Calu3 (cell line): ENCODE measurements at regions of chr2 and their contacts with region 1.

Region 1: DNA sequence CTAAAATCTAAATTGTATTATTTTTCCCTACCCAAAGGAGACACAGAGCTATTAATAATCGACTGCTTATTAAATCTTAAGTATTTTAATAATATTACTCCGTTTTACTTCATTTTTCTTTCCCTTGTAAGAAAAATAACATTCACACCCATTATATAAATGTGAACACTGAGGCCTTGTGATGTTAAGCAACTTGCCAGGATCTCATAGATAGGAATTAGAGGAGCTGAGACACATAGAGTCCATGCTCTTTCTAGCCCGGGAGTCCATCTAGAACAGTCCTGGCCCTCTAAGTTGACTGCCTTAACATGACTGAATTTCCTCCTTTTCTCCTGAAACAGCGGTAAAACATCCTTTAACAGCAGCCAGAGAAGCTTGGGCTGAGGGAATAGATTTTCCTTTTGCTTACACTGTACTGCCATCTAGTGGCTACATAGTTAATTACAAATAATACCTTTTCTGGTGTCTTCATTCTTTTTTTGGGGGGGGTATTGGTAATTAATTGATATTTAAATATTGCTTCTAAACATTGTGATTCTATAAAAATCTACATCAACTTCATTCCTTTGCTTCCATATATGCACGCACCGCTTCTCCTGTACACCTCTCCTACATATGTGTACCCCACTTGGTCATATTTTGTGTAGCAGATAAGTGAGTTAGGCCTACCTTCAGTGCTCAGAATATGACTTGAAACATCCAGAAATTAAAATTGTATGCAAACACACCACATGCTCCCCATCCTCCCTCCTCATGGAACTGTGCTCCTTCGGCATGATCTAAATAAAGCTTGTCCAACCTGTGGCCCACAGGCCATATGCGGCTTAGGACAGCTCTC is 125.8 kb upstream of the HNMT start:
- DNase-seq: no peak
- H3K4me3 Mint-ChIP-seq: no peak overlapping the region
- H3K27ac Mint-ChIP-seq: no peak overlapping the region
- H3K4me1 Mint-ChIP-seq: peaks cover 8% of the 10 kb centered on the region
- H3K27me3 Mint-ChIP-seq: no peaks in the 10 kb centered on the region
- CTCF ChIP-seq: no peak

Region 2: DNA sequence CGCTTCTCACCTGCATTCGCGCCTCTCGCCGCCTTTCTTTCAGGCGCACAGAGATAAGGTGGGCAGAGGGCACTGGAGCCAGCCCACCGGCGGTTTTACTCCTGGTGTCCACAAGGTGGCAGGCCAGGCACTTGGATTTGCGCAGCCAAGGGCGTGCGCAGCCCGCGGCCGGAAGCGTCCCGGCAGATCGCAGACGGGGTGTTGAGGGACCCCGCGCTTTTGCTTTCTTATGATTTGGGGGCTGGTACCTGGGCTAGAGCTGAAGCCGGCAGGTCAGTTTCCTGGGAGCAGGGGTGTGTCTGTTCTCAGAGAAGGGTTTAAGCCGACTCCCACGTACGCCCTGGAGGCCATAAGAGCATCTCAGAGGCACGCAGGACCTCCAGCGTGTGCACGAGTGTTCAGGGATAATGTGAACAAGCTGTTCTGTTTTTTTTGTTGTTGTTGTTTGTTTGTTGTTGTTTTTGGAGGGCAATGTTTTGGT is 1414.9 kb before region 1 on chr2:
- CTCF ChIA-PET with region 1: no interaction called
- intact Hi-C with region 1: loop called (anchors 2 kb)
- DNase-seq: peak; percentile 82
- H3K4me3 Mint-ChIP-seq: peak overlapping the region; percentile 77
- H3K27ac Mint-ChIP-seq: no peak overlapping the region
- H3K4me1 Mint-ChIP-seq: peaks cover 9% of the 10 kb centered on the region
- H3K27me3 Mint-ChIP-seq: peaks cover 36% of the 10 kb centered on the region
- CTCF ChIP-seq: peak; percentile 91

Region 3: DNA sequence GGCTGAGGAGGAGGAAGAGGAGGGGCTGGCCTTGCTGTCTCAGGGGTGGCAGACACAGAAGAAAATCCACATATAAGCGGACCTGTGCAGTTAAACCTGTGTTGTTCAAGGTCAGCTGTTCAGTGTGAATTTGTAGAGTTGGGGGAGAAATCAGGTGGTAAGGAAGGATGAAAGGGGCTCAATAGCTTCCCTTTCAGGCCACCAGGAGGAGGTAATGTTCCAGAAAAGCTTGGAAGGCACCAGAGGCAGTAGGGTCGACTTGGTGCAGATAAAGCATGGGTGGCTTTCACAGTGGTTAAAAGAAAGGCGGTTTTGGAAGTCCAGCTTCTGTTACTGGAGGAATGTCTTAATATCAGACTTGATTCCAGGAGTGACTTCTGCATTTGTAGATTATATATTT is 905.8 kb before region 1 on chr2:
- CTCF ChIA-PET with region 1: no interaction called
- intact Hi-C with region 1: loop called (anchors 1 kb)
- DNase-seq: peak; percentile 30
- H3K4me3 Mint-ChIP-seq: no peak overlapping the region
- H3K27ac Mint-ChIP-seq: no peak overlapping the region
- H3K4me1 Mint-ChIP-seq: no peaks in the 10 kb centered on the region
- H3K27me3 Mint-ChIP-seq: no peaks in the 10 kb centered on the region
- CTCF ChIP-seq: peak; percentile 35

Region 4: DNA sequence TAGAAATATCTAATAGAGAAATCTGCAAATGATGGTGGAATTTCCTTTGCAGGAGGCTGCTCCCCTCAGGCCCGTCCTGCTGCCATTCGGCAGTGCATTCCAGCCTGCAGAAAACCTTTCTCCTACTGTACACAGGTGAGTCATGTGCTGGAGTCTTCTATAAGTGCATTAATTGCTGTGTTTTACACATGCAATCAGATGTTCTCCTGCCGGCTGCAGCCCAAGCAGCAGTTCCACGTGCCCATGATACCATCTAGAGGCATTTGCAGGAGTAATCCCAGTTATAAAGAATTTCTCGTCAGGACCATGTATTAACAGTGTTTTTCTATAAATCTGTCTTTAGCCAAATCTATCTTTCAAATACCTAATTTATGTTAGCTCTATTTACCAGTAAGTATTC is 178.9 kb before region 1 on chr2:
- CTCF ChIA-PET with region 1: no interaction called
- intact Hi-C with region 1: loop called (anchors 1 kb)
- DNase-seq: peak; percentile 46
- H3K4me3 Mint-ChIP-seq: no peak overlapping the region
- H3K27ac Mint-ChIP-seq: no peak overlapping the region
- H3K4me1 Mint-ChIP-seq: no peaks in the 10 kb centered on the region
- H3K27me3 Mint-ChIP-seq: no peaks in the 10 kb centered on the region
- CTCF ChIP-seq: no peak

Region 5: DNA sequence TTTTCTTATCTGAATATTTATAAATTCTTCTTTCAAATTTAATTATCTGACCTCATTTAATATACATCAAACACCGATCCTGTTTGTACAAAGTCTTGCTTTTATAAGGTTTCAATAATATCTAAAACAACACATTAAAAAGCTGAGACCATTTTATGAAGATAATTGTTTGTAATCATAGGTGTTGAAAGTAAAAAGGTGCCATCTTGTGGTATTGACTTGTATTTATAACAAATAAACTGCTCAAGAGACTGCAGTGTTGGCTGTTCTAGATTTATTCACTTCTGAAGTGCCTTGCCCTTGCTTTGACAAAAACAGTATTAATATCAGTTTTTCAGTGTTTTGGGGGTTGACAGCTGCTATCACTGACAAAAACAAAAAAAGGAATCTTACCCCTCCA is 161.0 kb before region 1 on chr2:
- CTCF ChIA-PET with region 1: no interaction called
- intact Hi-C with region 1: loop called (anchors 5 kb)
- DNase-seq: no peak
- H3K4me3 Mint-ChIP-seq: no peak overlapping the region
- H3K27ac Mint-ChIP-seq: no peak overlapping the region
- H3K4me1 Mint-ChIP-seq: peaks cover 18% of the 10 kb centered on the region
- H3K27me3 Mint-ChIP-seq: no peaks in the 10 kb centered on the region
- CTCF ChIP-seq: no peak